Activated CD4-positive, alpha-beta T cell treated with anti-CD3 and anti-CD28 coated beads, Interleukin-2, amount 10 ng/mL, durations not matched to agents 24 days and 14 days (primary cell): ENCODE measurements at regions of chr19 and their contacts with region 1.

Region 1: GRCh38 chr19:50511068-50511822 is at the start of gene JOSD2:
- DNase-seq: peak; percentile 99
- H3K4me3 Mint-ChIP-seq: peak within 1 kb of the TSS; percentile 97
- H3K27ac Mint-ChIP-seq: peak within 1 kb of the TSS; percentile 95
- H3K4me1 Mint-ChIP-seq: peaks cover 21% of the 10 kb centered on the region
- H3K27me3 Mint-ChIP-seq: peaks cover 4% of the 10 kb centered on the region
- total RNA-seq, gene JOSD2: 41.7 and 44.0 TPM in 2 replicates

Region 2: GRCh38 chr19:50376166-50377050 is 134.8 kb before region 1 on chr19 and contains the start of gene NR1H2:
- intact Hi-C with region 1: loop called (anchors 1 kb)
- DNase-seq: peak; percentile 99
- H3K4me3 Mint-ChIP-seq: peak within 1 kb of the TSS; percentile 97
- H3K27ac Mint-ChIP-seq: peak within 1 kb of the TSS; percentile 99
- H3K4me1 Mint-ChIP-seq: peaks cover 16% of the 10 kb centered on the region
- H3K27me3 Mint-ChIP-seq: no peaks in the 10 kb centered on the region
- total RNA-seq, gene NR1H2: 81.4 and 84.7 TPM in 2 replicates

Region 3: DNA sequence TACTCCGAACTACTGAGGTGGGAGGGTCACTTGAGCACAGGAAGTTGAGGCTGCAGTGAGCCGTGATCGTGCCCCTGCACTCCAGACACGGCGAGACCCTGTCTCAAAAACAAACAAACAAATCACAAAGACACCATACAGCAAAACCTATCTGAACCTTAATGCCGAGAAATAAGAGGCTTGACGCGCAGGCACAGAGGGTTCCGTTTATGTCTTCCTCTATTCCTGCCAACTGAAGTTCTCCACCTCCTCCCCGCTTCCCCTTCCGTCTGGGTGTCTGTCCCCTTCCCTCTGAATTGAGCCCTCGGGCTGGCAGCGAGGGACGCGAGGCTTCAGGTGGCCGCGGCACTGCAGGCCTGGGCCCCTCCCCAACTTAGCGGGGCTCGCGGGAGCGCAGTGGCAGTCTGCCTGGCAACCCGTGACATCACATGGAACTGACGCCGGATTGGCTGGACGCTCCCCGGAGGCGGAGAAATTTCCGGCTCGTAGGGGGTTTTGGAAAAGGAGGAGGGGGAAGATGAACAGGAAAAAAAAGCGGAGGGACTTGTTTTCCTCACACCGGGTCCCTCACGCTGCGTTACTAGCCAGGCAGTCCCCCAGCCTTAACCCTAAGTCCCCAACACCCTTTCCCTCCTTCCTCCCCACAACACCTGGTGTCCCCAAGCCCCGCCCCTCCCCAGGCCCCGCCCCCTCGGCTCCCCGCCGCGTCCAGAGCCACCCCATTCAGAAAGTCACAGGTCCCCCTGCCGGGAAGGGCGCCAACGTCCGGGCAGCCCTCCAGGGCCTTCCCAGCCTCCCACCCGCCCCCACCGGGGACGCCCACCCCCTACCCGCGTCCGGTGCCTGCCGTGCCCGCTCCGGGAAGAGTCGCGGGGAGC is 79.7 kb before region 1 on chr19:
- intact Hi-C with region 1: loop called (anchors 10 kb)
- DNase-seq: peak; percentile 98
- H3K4me3 Mint-ChIP-seq: peak overlapping the region; percentile 83
- H3K27ac Mint-ChIP-seq: peak overlapping the region; percentile 90
- H3K4me1 Mint-ChIP-seq: peaks cover 10% of the 10 kb centered on the region
- H3K27me3 Mint-ChIP-seq: peaks cover 15% of the 10 kb centered on the region

Region 4: GRCh38 chr19:50531118-50531612 is 19.9 kb after region 1 on chr19:
- intact Hi-C with region 1: no loop called
- DNase-seq: no peak
- H3K4me3 Mint-ChIP-seq: no peak overlapping the region
- H3K27ac Mint-ChIP-seq: no peak overlapping the region
- H3K4me1 Mint-ChIP-seq: no peaks in the 10 kb centered on the region
- H3K27me3 Mint-ChIP-seq: no peaks in the 10 kb centered on the region

Region 5: DNA sequence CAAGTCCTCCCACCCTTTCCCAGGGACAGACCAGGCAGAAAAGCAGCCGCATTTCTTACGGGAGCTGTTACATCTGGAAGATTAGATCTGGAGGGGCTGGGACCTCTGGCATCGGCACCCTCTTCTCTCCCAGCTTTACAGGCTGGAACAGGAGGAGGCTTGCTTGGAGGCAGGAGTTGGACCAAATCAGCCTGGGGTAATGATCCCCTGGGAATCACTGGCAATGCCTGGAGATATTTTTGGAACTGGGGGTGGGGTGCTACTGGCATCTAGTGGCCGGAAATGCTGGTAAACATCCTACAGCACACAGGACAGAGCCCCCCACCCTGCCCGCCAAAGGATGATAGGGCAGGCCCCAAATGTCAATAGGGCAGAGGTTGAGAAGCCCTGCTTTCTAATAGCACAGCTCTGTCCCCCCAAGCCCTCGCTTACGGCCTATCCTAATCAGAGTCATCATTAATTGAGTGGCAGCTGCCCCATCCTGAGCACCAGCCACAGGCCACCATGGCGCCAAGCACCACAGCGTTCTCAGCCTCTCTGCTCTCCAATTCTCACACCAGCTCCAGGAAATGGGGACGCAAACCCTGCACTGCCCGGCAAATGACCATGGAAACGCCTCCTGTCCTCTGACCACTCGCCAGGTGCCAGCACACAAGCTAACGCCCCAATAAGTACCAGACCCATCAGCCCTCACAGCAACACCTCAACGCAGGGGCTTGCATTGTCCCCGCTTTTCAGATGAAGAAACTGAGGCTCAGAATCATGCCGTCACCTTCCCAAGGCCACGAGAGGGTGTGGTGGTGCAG is 36.3 kb after region 1 on chr19:
- intact Hi-C with region 1: no loop called
- DNase-seq: no peak
- H3K4me3 Mint-ChIP-seq: no peak overlapping the region
- H3K27ac Mint-ChIP-seq: no peak overlapping the region
- H3K4me1 Mint-ChIP-seq: no peaks in the 10 kb centered on the region
- H3K27me3 Mint-ChIP-seq: peaks cover 18% of the 10 kb centered on the region

Region 6: GRCh38 chr19:50804420-50805272 is 293.4 kb after region 1 on chr19:
- intact Hi-C with region 1: loop called (anchors 1 kb)
- DNase-seq: peak; percentile 99
- H3K4me3 Mint-ChIP-seq: peak overlapping the region; percentile 96
- H3K27ac Mint-ChIP-seq: peak overlapping the region; percentile 97
- H3K4me1 Mint-ChIP-seq: peaks cover 30% of the 10 kb centered on the region
- H3K27me3 Mint-ChIP-seq: no peaks in the 10 kb centered on the region